ENCODE measurements at regions of chr1 and their contacts with region 1.

Region 1: DNA sequence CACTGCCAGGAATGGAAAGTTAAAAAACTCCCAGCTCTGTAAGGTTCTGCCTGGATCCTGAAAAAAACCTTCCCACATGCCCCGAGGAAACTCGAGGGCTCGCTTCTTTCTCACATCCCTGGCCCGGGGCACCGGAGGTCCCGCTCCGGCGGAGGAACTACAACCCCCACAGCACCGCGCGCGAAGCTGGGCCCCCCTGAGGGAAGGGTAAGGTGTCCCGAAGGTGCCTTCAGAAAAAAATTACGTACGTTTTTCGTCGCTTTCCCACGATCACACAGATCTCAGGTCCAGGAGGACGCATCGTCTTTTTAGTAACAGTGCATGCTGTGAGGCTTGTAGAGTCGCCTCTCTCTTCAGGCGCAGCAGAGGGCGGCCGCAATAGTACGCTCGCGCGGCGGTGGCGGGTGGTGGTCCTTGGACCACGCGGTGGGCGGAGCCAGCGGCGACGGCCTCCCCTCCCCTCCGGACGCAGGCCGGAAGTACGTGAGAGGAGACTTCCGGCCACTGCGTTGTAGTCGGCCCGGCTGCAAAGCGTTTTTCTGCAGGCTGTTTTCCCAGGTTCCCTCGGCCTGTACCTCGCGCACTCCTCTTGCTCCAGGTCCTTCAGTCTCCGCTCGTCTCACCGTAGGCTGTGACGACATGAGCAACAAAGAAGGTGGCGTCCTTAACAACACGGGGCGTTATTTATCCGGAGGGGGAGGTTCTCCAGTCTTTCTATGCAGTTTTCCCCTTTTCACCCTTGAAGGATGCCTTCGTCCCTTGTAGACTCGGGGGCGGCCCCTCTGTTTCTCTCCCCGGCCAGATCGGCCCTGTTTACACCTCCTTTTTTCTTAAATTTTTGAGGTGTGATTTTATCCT is at the start of gene TSNAX:
- DNase-seq: peak; percentile 89
- H3K4me3 Mint-ChIP-seq: peak within 1 kb of the TSS; percentile 97
- H3K27ac Mint-ChIP-seq: peak within 1 kb of the TSS; percentile 99
- H3K4me1 Mint-ChIP-seq: peaks cover 30% of the 10 kb centered on the region
- H3K27me3 Mint-ChIP-seq: no peaks in the 10 kb centered on the region
- total RNA-seq, gene TSNAX: 43.9 and 44.4 TPM in 2 replicates

Region 2: DNA sequence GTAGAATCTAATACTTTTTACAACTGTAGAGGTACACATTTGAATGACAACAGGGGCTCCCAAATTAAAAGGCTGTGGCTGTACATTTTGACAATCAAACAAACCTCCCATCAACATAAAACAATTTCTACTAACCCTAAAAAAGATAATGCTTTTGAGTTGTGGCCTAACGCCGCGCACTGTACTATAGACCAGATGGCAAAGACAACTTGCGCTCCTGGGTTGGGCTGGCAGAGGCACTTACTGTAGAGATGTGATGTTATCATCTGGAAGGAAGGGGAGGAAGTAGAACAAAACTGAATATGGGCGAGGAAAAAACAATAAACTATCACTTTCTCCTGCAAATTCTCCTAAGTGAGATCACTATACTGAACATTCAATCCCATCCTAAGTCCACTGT is 164.2 kb before region 1 on chr1:
- intact Hi-C with region 1: loop called (anchors 5 kb)
- DNase-seq: no peak
- H3K4me3 Mint-ChIP-seq: no peak overlapping the region
- H3K27ac Mint-ChIP-seq: no peak overlapping the region
- H3K4me1 Mint-ChIP-seq: peaks cover 9% of the 10 kb centered on the region
- H3K27me3 Mint-ChIP-seq: no peaks in the 10 kb centered on the region

Region 3: DNA sequence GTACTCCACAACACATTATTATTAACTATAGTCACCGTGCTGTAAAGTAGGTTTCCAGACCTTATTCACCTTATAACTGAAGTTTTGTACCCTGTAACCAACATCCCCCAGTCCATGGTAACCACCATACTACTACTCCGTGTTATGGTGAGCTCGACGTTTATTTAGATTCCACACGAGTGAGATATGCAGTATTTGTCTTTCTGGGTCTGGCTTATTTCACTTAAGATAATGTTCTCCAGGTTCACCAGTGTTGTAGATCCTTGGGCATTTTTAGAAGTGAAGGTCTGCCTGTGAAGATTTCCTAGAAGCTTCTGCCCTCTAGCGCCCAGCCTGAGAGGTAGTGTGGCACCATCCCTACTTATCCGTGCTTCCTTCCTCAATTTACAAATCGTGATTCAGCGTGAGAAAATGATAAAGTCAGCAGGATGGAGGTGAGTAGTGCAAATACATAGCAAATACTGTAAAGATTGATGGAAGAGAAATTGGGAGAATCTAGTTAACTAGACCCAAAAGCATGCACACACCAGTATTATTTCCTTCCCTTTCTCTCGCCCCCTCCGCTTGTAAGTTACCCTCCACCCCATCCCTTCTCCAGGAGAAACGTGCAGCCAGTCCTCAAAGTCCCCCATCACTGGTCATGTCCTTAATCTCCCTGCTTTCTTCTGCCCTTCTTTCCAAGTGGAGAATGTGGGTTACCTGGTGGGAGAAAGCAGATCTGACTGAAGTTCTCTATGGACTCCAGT is 62.2 kb after region 1 on chr1:
- intact Hi-C with region 1: no loop called
- DNase-seq: peak; percentile 16
- H3K4me3 Mint-ChIP-seq: no peak overlapping the region
- H3K27ac Mint-ChIP-seq: no peak overlapping the region
- H3K4me1 Mint-ChIP-seq: peaks cover 7% of the 10 kb centered on the region
- H3K27me3 Mint-ChIP-seq: peaks cover 2% of the 10 kb centered on the region